IMR-90 (cell line): ENCODE measurements at regions of chr9 and their contacts with region 1.

Region 1: GRCh38 chr9:75996726-75997125 is 106.3 kb downstream of the PCSK5 start:
- DNase-seq: no peak
- ATAC-seq: no peak
- H3K4me3 ChIP-seq: no peak overlapping the region
- H3K27ac ChIP-seq: no peak overlapping the region
- H3K4me1 ChIP-seq: no peaks in the 10 kb centered on the region
- H3K27me3 ChIP-seq: no peaks in the 10 kb centered on the region
- CTCF ChIP-seq: no peak
- POLR2A ChIP-seq: no peak
- RAD21 ChIP-seq: no peak

Region 2: GRCh38 chr9:76067696-76068095 is 71.0 kb after region 1 on chr9:
- CTCF ChIA-PET with region 1: no interaction called
- POLR2A ChIA-PET with region 1: no interaction called
- dilution Hi-C with region 1: no loop called
- in situ Hi-C with region 1: no loop called
- intact Hi-C with region 1: no loop called
- DNase-seq: peak; percentile 1
- ATAC-seq: no peak
- H3K4me3 ChIP-seq: no peak overlapping the region
- H3K27ac ChIP-seq: no peak overlapping the region
- H3K4me1 ChIP-seq: no peaks in the 10 kb centered on the region
- H3K27me3 ChIP-seq: no peaks in the 10 kb centered on the region
- CTCF ChIP-seq: no peak
- POLR2A ChIP-seq: no peak
- RAD21 ChIP-seq: no peak

Region 3: GRCh38 chr9:76198336-76198735 is 201.6 kb after region 1 on chr9:
- CTCF ChIA-PET with region 1: no interaction called
- POLR2A ChIA-PET with region 1: interaction called, 13 read pairs
- dilution Hi-C with region 1: no loop called
- in situ Hi-C with region 1: no loop called
- intact Hi-C with region 1: no loop called
- DNase-seq: peak; percentile 47
- ATAC-seq: peak; percentile 43; the same call in 1 of the 2 replicates
- H3K4me3 ChIP-seq: no peak overlapping the region
- H3K27ac ChIP-seq: peak overlapping the region; percentile 6; the same call in 1 of the 2 replicates
- H3K4me1 ChIP-seq: peaks cover 10% of the 10 kb centered on the region
- H3K27me3 ChIP-seq: no peaks in the 10 kb centered on the region
- CTCF ChIP-seq: no peak
- POLR2A ChIP-seq: no peak
- RAD21 ChIP-seq: no peak

Region 4: DNA sequence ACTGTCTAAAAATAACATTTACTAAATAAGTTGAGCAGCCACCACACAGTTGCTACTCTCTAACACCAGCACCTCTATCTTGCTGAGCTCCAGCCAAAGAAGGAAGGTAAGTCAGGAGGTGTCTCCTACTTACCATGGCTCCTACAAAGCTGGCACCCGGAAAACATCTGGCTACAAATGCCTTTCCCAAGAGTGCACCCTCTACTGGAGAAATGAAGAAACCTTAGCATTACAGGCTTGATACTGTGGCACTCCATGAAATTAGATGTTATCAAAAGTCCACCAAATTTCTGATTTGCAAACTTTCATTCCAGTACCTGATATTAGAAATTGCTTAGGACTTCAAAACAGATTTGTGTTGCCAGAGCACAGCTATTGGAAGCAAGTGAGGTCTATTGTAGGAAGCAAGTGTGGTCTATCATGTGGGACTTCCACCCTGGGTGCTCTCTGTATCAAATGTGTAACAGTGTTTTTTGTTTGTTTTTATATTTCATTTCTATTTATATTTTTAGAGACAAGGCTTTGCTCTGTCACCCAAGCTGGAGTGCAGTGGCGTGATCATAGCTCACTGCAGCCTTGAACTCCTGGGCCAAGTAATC is 423.2 kb after region 1 on chr9:
- CTCF ChIA-PET with region 1: no interaction called
- POLR2A ChIA-PET with region 1: no interaction called
- dilution Hi-C with region 1: no loop called
- in situ Hi-C with region 1: no loop called
- intact Hi-C with region 1: no loop called
- DNase-seq: no peak
- ATAC-seq: peak; percentile 63
- H3K4me3 ChIP-seq: no peak overlapping the region
- H3K27ac ChIP-seq: no peak overlapping the region
- H3K4me1 ChIP-seq: no peaks in the 10 kb centered on the region
- H3K27me3 ChIP-seq: no peaks in the 10 kb centered on the region
- CTCF ChIP-seq: peak; percentile 48
- POLR2A ChIP-seq: no peak
- RAD21 ChIP-seq: no peak; the same call in 1 of the 2 replicates